GM12878 (cell line): ENCODE measurements at regions of chr16 and their contacts with region 1.

Region 1: GRCh38 chr16:30112197-30113030 is 923 bp downstream of the GDPD3 start:
- DNase-seq: no peak
- ATAC-seq: peak; percentile 93
- H3K4me3 ChIP-seq: no peak overlapping the region
- H3K27ac ChIP-seq: no peak overlapping the region
- H3K4me1 ChIP-seq: peaks cover 2% of the 10 kb centered on the region
- H3K27me3 ChIP-seq: no peaks in the 10 kb centered on the region
- CTCF ChIP-seq: peak; percentile 75 to 87 (median 76)
- EP300 ChIP-seq: no peak
- POLR2A ChIP-seq: no peak
- RAD21 ChIP-seq: peak; percentile 61

Region 2: GRCh38 chr16:30096862-30097563 is 15.4 kb before region 1 on chr16:
- CTCF ChIA-PET with region 1: interaction called, 21 read pairs
- POLR2A ChIA-PET with region 1: interaction called, 6 read pairs
- RAD21 ChIA-PET with region 1: interaction called, 13 read pairs
- SMC1A ChIA-PET with region 1: interaction called, 6 read pairs
- in situ Hi-C with region 1: no loop called
- intact Hi-C with region 1: no loop called
- DNase-seq: no peak
- ATAC-seq: no peak
- H3K4me3 ChIP-seq: peak overlapping the region; percentile 8
- H3K27ac ChIP-seq: peak overlapping the region; percentile 77; the same call in 1 of the 2 replicates
- H3K4me1 ChIP-seq: peaks cover 22% of the 10 kb centered on the region
- H3K27me3 ChIP-seq: no peaks in the 10 kb centered on the region
- CTCF ChIP-seq: no peak
- EP300 ChIP-seq: no peak
- POLR2A ChIP-seq: no peak
- RAD21 ChIP-seq: no peak

Region 3: DNA sequence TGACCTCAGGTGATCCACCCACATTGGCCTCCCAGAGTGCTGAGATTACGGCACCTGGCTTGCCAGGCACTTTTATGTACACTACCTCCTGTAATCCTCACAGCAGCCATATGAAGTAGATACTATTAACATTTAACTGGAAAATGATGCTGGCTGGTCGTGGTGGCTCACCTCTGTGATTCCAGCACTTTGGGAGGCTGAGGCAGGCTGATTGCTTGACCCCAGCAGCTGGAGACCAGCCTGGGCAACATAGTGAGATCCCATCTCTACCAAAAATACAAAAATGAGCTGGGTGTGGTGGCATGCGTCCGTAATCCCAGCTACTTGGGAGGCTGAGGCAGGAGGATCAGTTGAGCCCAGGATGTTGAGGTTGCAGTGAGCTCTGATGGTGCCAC is 12.6 kb after region 1 on chr16:
- CTCF ChIA-PET with region 1: interaction called, 22 read pairs
- POLR2A ChIA-PET with region 1: interaction called, 5 read pairs
- RAD21 ChIA-PET with region 1: interaction called, 5 read pairs
- SMC1A ChIA-PET with region 1: no interaction called
- in situ Hi-C with region 1: no loop called
- intact Hi-C with region 1: no loop called
- DNase-seq: no peak
- ATAC-seq: no peak
- H3K4me3 ChIP-seq: no peak overlapping the region
- H3K27ac ChIP-seq: no peak overlapping the region
- H3K4me1 ChIP-seq: peaks cover 17% of the 10 kb centered on the region
- H3K27me3 ChIP-seq: no peaks in the 10 kb centered on the region
- CTCF ChIP-seq: no peak
- EP300 ChIP-seq: no peak
- POLR2A ChIP-seq: no peak
- RAD21 ChIP-seq: no peak